Activated CD8-positive, alpha-beta T cell treated with anti-CD3 and anti-CD28 coated beads for 36 hours (primary cell): ENCODE measurements at regions of chr16 and their contacts with region 1.

Region 1: DNA sequence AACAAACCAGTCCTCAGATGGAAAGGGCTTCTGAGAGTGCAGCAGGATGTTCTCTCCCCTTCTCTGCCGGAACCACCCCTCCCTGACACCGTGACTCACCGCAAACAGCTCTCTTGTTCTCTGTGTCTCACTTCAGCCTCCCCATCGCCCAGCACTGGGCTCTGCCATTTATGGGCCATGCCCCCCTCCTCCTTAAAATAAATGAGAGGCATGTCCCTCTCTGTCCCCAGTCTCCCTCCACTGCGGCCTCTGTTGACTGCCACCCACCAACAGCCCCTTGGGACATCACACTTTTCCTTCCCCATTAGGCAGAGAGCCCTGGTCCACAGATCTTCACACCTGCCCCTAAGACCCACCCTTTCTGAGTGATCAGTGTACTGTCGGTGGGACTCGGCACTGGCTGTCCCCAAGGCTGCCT is 6.3 kb downstream of the CCDC102A start:
- DNase-seq: peak; percentile 91
- ATAC-seq: peak; percentile 96
- H3K4me3 Mint-ChIP-seq: peak overlapping the region; percentile 54
- H3K27ac Mint-ChIP-seq: peak overlapping the region; percentile 96
- H3K4me1 Mint-ChIP-seq: peaks cover 53% of the 10 kb centered on the region
- H3K27me3 Mint-ChIP-seq: no peaks in the 10 kb centered on the region
- CTCF ChIP-seq: no peak

Region 2: DNA sequence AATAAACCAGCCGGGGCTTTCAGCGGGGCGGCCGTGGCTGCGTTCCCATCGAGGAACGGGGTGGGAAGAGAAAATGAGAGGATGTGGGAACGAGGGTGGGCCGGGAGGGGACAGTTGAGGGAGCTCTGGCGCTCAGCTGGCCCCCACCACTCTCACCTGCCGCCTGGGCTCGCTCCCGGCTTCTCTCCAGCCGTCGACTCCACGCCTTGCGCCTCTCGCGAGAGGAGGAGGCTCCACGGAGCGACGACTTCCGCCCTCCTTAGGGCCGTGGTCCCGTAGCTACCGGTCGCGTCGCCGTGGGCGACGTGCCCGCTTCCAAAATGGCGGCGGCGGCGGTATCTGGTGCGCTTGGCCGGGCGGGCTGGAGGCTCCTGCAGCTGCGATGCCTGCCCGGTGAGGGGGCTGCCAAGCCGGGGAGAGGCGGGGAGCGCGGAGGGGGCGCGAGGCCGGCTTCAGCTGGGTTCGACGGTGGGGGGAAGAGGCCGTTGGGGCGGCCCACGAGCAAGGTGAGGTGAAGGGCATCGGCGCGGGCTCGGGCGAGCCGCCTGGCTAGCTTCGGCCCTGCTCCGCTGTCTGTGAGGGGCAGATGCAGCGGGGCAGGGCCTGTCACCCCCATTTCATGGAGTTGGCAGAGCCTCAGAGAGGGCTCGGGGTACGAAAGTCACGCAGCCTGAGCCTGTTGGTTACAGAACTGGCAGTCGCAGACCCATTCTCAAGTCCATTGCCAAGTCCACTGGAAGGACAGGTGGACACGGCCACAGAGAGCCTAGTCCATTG is 82.7 kb before region 1 on chr16 and contains the starts of genes CIAPIN1 and COQ9:
- CTCF ChIA-PET with region 1: no interaction called
- POLR2A ChIA-PET with region 1: interaction called, 10 read pairs
- intact Hi-C with region 1: no loop called
- DNase-seq: peak; percentile 95
- ATAC-seq: peak; percentile 99
- H3K4me3 Mint-ChIP-seq: peak within 1 kb of the TSS; percentile 94
- H3K27ac Mint-ChIP-seq: peak within 1 kb of the TSS; percentile 91
- H3K4me1 Mint-ChIP-seq: peaks cover 47% of the 10 kb centered on the region
- H3K27me3 Mint-ChIP-seq: no peaks in the 10 kb centered on the region
- CTCF ChIP-seq: no peak
- total RNA-seq, gene CIAPIN1: 53.3 to 53.4 TPM
- total RNA-seq, gene COQ9: 39.3 to 39.6 TPM

Region 3: DNA sequence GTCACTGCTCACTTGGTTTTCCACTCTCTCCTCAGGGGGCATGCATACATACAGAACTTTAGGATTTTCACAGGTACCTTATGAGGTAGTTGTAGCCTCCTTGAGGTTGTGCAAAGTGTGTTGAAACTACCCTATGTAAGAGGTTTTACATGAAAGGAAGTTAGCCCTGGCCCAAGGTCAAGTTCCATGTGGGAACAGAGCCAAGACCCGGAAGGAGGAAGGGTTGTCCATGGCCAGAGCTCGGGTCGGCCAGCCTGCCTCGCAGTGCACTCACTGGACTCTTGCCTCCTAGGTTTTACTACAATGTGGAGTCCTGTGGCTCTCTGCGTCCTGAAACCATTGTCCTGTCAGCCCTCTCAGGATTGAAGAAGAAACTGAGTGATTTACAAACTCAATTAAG is 59.4 kb before region 1 on chr16:
- CTCF ChIA-PET with region 1: interaction called, 7 read pairs
- POLR2A ChIA-PET with region 1: no interaction called
- intact Hi-C with region 1: loop called (anchors 5 kb)
- DNase-seq: no peak
- ATAC-seq: no peak
- H3K4me3 Mint-ChIP-seq: no peak overlapping the region
- H3K27ac Mint-ChIP-seq: no peak overlapping the region
- H3K4me1 Mint-ChIP-seq: peaks cover 7% of the 10 kb centered on the region
- H3K27me3 Mint-ChIP-seq: no peaks in the 10 kb centered on the region
- CTCF ChIP-seq: no peak